GM10248 (cell line): ENCODE measurements at regions of chr16 and their contacts with region 1.

Region 1: DNA sequence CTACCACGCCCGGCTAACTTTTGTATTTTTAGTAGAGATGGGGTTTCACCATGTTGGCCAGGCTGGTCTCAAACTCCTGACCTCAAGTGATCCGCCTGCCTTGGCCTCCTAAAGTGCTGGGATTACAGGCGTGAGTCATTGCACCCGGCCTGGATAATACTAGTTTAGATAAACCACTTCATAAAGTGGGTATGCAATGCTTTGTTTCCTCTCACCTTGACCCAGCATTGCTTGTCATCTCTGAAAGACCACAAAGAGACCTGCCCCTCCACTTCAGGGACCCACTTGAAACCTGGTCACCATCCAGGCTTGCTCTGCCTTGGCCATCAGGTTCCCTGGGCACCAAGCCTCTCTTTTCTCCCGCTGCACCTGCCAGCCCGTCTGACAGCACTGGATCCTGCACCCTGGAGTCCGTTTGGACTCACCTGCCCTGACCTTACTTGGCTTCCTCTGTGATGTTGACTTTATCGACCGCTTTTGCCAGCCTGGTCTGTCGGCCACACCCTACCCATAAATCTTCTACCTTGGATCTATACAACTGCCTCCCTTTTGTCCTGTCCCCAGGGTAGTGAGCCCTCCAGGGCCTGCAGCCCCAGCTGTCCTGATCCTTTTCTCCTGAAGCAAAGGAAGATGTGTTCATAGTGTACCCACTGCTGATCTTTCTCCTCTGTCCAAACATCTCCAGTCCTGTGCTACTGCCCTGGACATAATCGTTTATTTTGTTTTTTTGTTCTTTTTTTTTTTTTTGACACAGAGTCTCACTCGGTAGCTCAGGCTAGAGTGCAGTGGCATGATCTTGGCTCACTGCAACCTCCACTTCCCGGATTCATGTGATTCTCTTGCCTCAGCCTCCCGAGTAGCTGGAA is 12.7 kb upstream of the ZG16 start:
- DNase-seq: no peak
- CTCF ChIP-seq: no peak

Region 2: DNA sequence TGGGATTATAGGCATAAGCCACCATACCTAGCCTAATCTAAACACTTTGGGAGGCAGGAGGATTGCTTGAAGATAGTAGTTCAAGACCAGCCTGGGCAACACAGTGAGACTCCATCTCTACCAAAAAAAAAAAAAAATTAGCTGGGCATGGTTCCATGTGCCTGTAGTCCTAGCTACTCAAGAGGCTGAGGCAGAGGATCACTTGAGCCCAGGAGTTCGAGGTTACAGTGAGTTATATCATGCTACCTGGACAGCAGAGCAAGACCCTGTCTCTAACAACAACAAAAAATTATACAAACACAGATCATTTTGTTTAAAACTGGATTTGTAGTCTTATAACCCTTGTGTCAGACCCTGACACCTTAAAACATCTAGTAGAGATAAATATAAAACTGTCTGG is 11.9 kb before region 1 on chr16:
- CTCF ChIA-PET with region 1: interaction called, 14 read pairs
- POLR2A ChIA-PET with region 1: no interaction called
- DNase-seq: no peak
- CTCF ChIP-seq: no peak